ENCODE measurements at regions of chr19 and their contacts with region 1.

Region 1: GRCh38 chr19:1812469-1813196 is 557 bp upstream of the ATP8B3 start:
- DNase-seq: peak; percentile 82
- ATAC-seq: peak; percentile 81
- H3K4me3 Mint-ChIP-seq: peak overlapping the region; percentile 96
- H3K27ac Mint-ChIP-seq: peak overlapping the region; percentile 90
- H3K4me1 Mint-ChIP-seq: peaks cover 14% of the 10 kb centered on the region
- H3K27me3 Mint-ChIP-seq: no peaks in the 10 kb centered on the region
- CTCF ChIP-seq: no peak

Region 2: GRCh38 chr19:1549332-1549945 is 263.2 kb before region 1 on chr19:
- CTCF ChIA-PET with region 1: no interaction called
- POLR2A ChIA-PET with region 1: no interaction called
- intact Hi-C with region 1: loop called (anchors 5 kb)
- DNase-seq: no peak
- ATAC-seq: no peak
- H3K4me3 Mint-ChIP-seq: no peak overlapping the region
- H3K27ac Mint-ChIP-seq: no peak overlapping the region
- H3K4me1 Mint-ChIP-seq: peaks cover 6% of the 10 kb centered on the region
- H3K27me3 Mint-ChIP-seq: peaks cover 14% of the 10 kb centered on the region
- CTCF ChIP-seq: no peak

Region 3: DNA sequence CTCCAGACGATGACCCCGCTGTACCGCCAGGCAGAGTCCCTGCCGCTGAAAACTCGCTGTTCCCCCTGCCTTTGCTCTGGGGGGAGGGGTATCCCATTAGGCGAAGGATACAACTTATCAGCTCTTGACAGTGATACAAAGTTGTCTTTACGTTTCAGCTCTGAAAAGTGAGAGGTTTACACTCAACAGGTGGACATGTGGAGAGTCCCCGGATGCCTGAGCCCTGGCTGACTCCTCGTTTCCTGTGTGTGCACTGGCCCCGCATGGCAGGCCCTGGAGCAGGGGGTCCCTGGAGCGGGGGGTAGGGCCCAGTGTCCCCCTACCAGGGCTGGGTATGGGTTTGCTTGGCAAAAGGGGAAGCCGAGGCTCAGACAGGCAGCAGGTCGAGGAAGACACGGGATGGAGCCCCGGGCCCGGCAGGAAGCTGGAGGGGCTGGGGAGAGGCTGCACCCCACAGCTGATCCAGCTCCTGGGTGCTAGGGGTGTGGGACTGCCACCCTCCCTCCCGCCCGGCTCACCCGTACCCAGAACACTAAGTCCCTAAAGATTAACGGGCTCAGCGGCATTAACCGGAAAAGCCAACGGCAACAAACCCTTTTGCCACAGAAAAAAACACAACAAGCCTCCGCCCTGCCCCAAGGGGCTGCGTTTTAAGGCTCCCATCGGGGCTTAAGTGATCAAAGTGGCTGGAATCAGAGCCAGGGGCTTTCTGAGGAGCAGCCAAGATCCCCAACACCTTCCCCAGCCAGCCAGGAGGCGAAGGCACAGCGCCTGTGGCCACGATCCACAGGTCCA is 165.8 kb before region 1 on chr19:
- CTCF ChIA-PET with region 1: no interaction called
- POLR2A ChIA-PET with region 1: no interaction called
- intact Hi-C with region 1: no loop called
- DNase-seq: no peak
- ATAC-seq: no peak
- H3K4me3 Mint-ChIP-seq: no peak overlapping the region
- H3K27ac Mint-ChIP-seq: peak overlapping the region; percentile 76
- H3K4me1 Mint-ChIP-seq: peaks cover 50% of the 10 kb centered on the region
- H3K27me3 Mint-ChIP-seq: no peaks in the 10 kb centered on the region
- CTCF ChIP-seq: no peak

Region 4: DNA sequence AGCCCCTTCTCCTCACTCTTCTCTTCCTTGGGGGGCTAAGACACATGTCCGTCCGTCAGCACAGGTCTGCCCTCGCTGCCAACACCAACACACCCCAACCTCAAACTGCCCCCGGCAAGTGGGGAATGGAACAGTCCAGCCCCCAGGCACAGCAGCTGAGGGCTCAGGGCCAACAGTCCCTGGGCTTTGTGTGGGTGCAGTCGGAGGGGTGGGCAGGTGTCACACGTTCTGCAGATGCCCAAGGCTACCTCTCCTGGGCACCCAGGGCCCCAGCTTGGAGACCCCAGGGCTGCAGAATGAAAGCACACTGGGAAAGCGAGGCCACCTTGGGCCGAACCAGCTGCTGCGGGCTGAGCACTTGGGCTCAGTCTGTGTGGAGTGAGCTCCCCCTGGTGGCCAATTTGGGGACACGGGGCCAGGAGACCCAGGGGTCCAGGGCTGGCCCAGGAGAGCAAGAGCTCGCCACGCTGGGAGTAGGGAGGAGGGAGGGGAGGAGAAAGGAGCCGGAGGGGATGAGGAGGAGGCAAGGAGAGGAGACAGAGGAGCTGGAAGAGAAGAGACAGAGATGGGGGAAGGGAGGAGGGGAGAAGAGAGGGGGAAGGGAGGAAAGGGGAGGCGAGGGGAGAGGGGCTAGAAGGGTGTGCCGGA is 13.4 kb after region 1 on chr19:
- CTCF ChIA-PET with region 1: interaction called, 4 read pairs
- POLR2A ChIA-PET with region 1: no interaction called
- intact Hi-C with region 1: loop called (anchors 2 kb)
- DNase-seq: peak; percentile 72
- ATAC-seq: peak; percentile 93
- H3K4me3 Mint-ChIP-seq: no peak overlapping the region
- H3K27ac Mint-ChIP-seq: no peak overlapping the region
- H3K4me1 Mint-ChIP-seq: peaks cover 3% of the 10 kb centered on the region
- H3K27me3 Mint-ChIP-seq: no peaks in the 10 kb centered on the region
- CTCF ChIP-seq: no peak

Region 5: GRCh38 chr19:1848399-1849131 is 35.9 kb after region 1 on chr19 and contains the start of gene REXO1:
- CTCF ChIA-PET with region 1: no interaction called
- POLR2A ChIA-PET with region 1: interaction called, 3 read pairs
- intact Hi-C with region 1: loop called (anchors 2 kb)
- DNase-seq: peak; percentile 98
- ATAC-seq: peak; percentile 74
- H3K4me3 Mint-ChIP-seq: peak within 1 kb of the TSS; percentile 88
- H3K27ac Mint-ChIP-seq: peak within 1 kb of the TSS; percentile 88
- H3K4me1 Mint-ChIP-seq: peaks cover 69% of the 10 kb centered on the region
- H3K27me3 Mint-ChIP-seq: no peaks in the 10 kb centered on the region
- CTCF ChIP-seq: peak; percentile 86
- total RNA-seq, gene REXO1: 56.3 and 69.6 TPM in 2 replicates

Measured in activated B cell treated with CpG ODN at 0.5 μM for 24 hours (primary cell).